ENCODE measurements at regions of chr3 and their contacts with region 1.

Region 1: DNA sequence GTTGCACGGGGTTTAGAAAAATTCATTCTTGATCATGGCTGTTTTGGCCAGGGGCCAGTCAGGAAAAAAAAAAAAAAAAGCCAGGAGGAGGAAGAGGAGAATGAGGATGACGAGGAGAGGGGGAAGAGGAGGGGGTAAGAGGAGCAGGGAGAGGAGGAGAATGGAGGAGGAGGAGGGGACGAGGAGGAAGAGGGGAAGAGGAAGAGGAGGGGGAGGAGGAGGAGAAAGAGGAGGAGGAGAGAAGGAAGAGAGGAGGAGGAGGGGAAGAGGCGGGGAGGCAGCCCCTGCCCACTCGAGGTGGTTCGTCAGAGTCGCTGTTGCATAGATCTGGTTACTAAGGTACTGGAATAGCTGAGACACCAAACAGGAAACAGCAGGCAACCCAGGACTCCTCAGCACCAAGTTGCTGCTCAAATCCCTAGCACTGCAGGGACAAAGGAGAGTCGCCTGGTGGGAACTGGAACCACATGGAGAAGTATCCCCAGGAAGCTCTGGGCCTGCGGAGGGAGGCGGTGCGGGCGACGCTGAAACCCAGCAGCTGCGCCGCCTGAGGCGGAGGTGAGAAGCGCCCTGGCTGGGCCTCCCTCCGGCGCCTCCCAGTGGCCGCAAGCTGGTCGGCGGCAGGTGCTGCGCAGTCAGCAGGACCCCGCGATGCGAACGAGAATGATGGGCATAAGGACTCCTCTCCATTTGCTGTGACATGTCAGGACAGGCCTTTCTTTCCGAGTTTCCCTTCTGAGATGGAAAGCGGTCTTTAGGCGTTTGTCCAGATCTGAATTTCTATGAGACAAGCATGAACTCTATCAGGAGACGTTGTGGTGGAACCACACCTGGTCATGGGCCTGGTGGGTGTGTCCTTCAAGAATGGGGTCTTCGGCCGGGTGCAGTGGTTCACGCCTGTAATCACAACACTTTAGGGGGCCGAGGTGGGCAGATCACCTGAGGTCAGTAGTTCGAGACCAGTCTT is 17.5 kb downstream of the FAM240A start:
- DNase-seq: no peak
- H3K4me3 ChIP-seq: peak overlapping the region; percentile 41
- CTCF ChIP-seq: peak; percentile 100

Region 2: DNA sequence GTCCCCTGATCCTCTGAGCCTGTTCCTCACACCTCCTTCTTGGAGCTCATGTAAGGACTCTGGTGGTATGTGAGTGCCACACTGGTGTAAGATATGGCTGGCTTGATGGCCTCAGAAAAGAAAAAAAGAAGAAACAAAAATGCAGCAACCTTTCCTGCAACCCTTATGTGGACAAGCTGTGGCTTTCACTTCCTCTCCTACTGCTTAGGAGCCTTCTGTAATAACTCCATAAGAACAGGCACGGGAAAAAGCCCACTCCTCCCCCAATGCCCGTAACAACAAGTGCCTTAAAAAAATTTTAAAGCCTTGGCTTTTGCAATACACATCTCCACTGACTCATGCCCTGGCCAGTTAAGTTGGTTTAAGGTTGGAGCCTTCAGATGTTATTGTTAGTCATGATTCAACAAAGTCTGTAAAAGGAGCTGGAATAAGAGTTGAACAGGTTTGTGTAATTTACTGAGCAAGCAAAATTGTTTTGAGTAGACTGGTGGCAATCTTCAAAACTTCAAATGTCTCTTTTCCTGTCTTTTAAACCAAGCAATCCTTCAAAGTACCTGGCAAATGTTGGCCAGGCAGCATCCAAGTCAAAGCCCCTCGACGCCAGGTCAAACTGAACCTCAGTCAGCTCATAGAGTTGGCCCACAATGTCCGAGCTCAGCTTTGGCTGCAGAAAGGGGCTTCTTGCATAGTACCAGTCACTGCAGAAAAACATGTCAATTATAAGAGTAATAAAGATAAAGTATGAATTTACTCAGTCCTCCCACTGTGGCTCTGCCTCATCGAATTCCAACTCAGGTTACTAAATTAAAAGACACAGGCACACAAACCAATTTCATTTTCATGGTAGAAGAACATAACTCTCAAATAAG is 657.1 kb before region 1 on chr3:
- CTCF ChIA-PET with region 1: no interaction called
- POLR2A ChIA-PET with region 1: no interaction called
- DNase-seq: peak; percentile 82
- H3K4me3 ChIP-seq: no peak overlapping the region
- CTCF ChIP-seq: no peak

Region 3: GRCh38 chr3:46449755-46450552 is 179.9 kb before region 1 on chr3:
- CTCF ChIA-PET with region 1: interaction called, 14 read pairs
- POLR2A ChIA-PET with region 1: no interaction called
- DNase-seq: no peak
- H3K4me3 ChIP-seq: no peak overlapping the region
- CTCF ChIP-seq: peak; percentile 47

Region 4: DNA sequence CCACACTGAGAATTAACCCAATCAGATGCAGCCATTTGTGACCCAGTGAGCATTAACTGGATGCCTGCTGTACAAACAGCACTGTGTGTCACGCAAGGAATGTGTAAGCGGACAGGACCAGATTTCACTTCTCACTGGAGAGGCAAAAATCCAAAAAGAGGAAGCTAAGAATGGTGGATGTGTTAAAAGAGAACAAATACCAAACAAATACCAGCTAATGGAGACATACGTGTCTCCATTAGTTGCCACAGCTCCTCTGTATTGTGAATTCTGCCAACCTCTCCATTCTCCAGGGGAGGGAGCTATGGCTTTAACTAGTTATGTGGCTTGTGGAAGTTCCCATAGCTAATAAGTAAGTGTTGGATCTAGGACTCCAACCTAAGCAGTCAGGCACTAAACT is 167.7 kb before region 1 on chr3:
- CTCF ChIA-PET with region 1: interaction called, 13 read pairs
- POLR2A ChIA-PET with region 1: no interaction called
- DNase-seq: no peak
- H3K4me3 ChIP-seq: no peak overlapping the region
- CTCF ChIP-seq: no peak

Region 5: GRCh38 chr3:46496741-46497554 is 132.9 kb before region 1 on chr3:
- CTCF ChIA-PET with region 1: interaction called, 418 read pairs
- POLR2A ChIA-PET with region 1: no interaction called
- DNase-seq: no peak
- H3K4me3 ChIP-seq: no peak overlapping the region
- CTCF ChIP-seq: peak; percentile 24

Region 6: DNA sequence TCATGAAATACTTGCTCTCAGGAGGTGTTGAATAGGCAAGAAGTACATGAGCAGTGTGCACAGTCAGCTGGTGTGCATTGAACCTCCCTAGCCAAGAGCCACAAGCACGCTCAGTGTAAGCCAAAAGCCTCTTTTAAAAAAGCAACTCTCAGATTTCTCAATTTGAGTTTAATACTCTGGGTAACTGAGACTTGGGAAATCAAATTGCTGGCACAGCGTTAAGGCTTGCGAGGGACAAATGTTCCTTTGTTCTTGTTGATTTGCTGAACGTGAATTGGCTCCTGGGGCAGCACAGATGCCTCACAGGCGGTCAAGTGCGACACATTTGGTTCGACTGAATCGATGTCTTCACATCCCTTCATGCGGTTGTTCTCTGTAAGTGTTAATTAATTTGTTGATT is 17.5 kb before region 1 on chr3 and contains the start of gene FAM240A:
- CTCF ChIA-PET with region 1: interaction called, 43 read pairs
- POLR2A ChIA-PET with region 1: interaction called, 3 read pairs
- DNase-seq: no peak
- H3K4me3 ChIP-seq: no peak within 1 kb of the TSS
- CTCF ChIP-seq: no peak

Region 7: GRCh38 chr3:46642971-46643370 is 13.1 kb after region 1 on chr3:
- CTCF ChIA-PET with region 1: interaction called, 32 read pairs
- POLR2A ChIA-PET with region 1: interaction called, 3 read pairs
- DNase-seq: no peak
- H3K4me3 ChIP-seq: no peak overlapping the region
- CTCF ChIP-seq: no peak